ENCODE measurements at regions of chr19 and their contacts with region 1.

Region 1: DNA sequence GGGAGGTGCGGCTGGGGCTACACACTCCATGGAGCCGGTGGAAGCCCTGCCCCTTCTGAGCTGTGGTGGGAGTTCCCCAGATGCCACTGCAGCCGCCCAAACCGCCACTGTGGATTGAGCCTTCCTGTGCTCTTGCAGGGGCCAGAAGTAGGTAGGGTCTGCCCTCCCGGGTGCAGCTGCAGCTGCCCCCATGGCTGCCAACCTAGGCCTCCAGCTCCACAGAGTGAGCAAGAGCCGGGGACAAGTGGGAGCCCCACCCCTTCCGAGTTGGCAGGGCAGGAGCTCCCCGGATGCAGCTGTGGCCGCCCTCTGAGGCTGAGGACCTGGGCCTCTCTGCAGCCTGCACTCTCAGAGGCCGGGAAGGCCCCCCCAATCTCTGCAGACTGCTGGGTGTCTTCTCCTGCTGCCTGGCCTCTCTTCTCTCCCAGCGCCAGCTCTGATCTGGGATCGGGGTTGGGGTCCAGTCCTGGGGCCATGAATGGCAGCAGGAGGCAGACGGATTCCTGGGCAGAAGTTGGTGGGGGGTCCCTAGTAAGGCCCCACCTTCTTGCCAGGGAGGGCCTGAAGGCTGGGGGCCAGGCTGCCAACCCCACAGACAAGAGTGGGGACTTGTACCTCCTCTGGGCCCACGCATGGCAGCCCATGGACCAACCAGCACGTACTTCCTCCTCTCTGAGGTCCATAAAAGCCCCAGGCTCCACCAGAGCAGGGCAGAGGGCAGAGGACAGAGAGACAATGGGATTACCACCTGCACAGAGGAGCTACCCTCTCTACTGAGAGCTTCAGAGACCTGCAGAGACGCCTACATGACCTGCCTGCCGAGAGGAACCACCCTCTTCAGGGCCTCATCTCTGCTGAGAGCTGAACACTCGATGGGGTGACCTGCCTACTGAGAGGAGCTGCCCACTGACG is 28.9 kb downstream of the AP2S1 start:
- DNase-seq: peak in 2 of 5 donors; percentile 49 to 73
- ATAC-seq: peak in 3 of 4 donors; percentile 33 to 62 (median 45)
- H3K4me3 ChIP-seq: peak overlapping the region in 1 of 12 donors; percentile 1
- H3K27ac ChIP-seq: peak overlapping the region in 1 of 12 donors; percentile 57
- H3K4me1 ChIP-seq: peaks cover 0 to 37% (median 0%) of the 10 kb centered on the region in 12 donors
- H3K27me3 ChIP-seq: no peaks in the 10 kb centered on the region
- CTCF ChIP-seq: no peak
- POLR2A ChIP-seq: no peak

Region 2: DNA sequence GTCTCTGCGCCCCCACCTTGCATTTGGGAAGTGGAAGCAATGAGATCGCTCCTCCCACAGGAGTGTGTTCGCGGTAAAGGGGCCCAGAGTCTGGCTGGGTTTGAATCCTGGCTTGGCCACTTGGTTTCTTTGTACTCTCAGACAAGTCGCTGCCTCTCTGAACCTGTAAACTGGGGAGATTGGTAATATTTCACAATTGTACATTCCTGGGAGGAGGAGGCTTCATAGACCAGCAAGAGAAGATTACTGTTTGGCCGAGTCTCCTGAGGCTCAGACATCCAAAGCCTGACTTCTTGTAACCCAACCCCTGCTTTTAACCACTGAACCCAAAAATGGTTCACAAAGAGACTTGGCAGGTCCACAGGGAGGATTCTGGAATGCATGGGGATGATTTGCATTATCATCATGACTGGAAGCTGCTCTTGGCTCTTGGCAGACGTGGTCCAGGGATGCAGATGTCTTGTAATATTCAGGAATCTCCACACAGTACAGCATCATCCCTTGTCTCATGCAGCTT is 61.9 kb before region 1 on chr19:
- intact Hi-C with region 1: loop called in 1 of 10 experiments (anchors 5 kb)
- DNase-seq: no peak
- ATAC-seq: no peak
- H3K4me3 ChIP-seq: no peak overlapping the region
- H3K27ac ChIP-seq: peak overlapping the region in 2 of 12 donors; percentile 42 to 49
- H3K4me1 ChIP-seq: peaks cover 0 to 37% (median 6%) of the 10 kb centered on the region in 12 donors
- H3K27me3 ChIP-seq: no peaks in the 10 kb centered on the region
- CTCF ChIP-seq: no peak
- POLR2A ChIP-seq: no peak

Region 3: GRCh38 chr19:46788262-46788967 is 33.3 kb before region 1 on chr19 and contains the start of gene SLC1A5:
- intact Hi-C with region 1: loop called in 1 of 10 experiments (anchors 5 kb)
- DNase-seq: peak; percentile 95 to 98 (median 96)
- ATAC-seq: peak; percentile 86 to 95 (median 94)
- H3K4me3 ChIP-seq: peak within 1 kb of the TSS; percentile 24 to 80 (median 64)
- H3K27ac ChIP-seq: peak within 1 kb of the TSS; percentile 49 to 95 (median 82)
- H3K4me1 ChIP-seq: peaks cover 0 to 49% (median 26%) of the 10 kb centered on the region in 12 donors
- H3K27me3 ChIP-seq: peaks cover 0 to 11% (median 0%) of the 10 kb centered on the region in 9 donors
- CTCF ChIP-seq: peak in 1 of 12 donors; percentile 5
- POLR2A ChIP-seq: peak; percentile 3 to 93
- total RNA-seq, gene SLC1A5: 3.7 to 22.4 (median 8.9) TPM

Region 4: GRCh38 chr19:46803555-46803954 is 18.2 kb before region 1 on chr19:
- intact Hi-C with region 1: loop called in 1 of 10 experiments (anchors 2 kb)
- DNase-seq: no peak
- ATAC-seq: no peak
- H3K4me3 ChIP-seq: no peak overlapping the region
- H3K27ac ChIP-seq: no peak overlapping the region
- H3K4me1 ChIP-seq: no peaks in the 10 kb centered on the region
- H3K27me3 ChIP-seq: no peaks in the 10 kb centered on the region
- CTCF ChIP-seq: no peak
- POLR2A ChIP-seq: no peak

Measured in heart left ventricle (tissue), 16 donors.